Colonic mucosa (tissue), 4 donors: ENCODE measurements at regions of chr3 and their contacts with region 1.

Region 1: GRCh38 chr3:94004301-94004910 is 24.0 kb downstream of the STX19 start:
- DNase-seq: no peak
- H3K4me3 ChIP-seq: no peak overlapping the region
- H3K27ac ChIP-seq: no peak overlapping the region
- H3K4me1 ChIP-seq: no peaks in the 10 kb centered on the region
- H3K27me3 ChIP-seq: no peaks in the 10 kb centered on the region
- CTCF ChIP-seq: peak; percentile 81

Region 2: GRCh38 chr3:94069194-94069813 is 64.9 kb after region 1 on chr3:
- intact Hi-C with region 1: loop called (anchors 5 kb)
- DNase-seq: no peak
- H3K4me3 ChIP-seq: no peak overlapping the region
- H3K27ac ChIP-seq: no peak overlapping the region
- H3K4me1 ChIP-seq: peaks cover 12% of the 10 kb centered on the region
- H3K27me3 ChIP-seq: no peaks in the 10 kb centered on the region
- CTCF ChIP-seq: peak; percentile 59

Region 3: GRCh38 chr3:94092086-94092485 is 87.7 kb after region 1 on chr3:
- intact Hi-C with region 1: no loop called
- DNase-seq: no peak
- H3K4me3 ChIP-seq: no peak overlapping the region
- H3K27ac ChIP-seq: no peak overlapping the region
- H3K4me1 ChIP-seq: no peaks in the 10 kb centered on the region
- H3K27me3 ChIP-seq: no peaks in the 10 kb centered on the region
- CTCF ChIP-seq: no peak